MCF 10A (cell line): ENCODE measurements at regions of chr6 and their contacts with region 1.

Region 1: GRCh38 chr6:45709781-45710220 is 305.9 kb downstream of the CLIC5 start:
- DNase-seq: no peak
- H3K4me3 Mint-ChIP-seq: no peak overlapping the region
- H3K27ac Mint-ChIP-seq: no peak overlapping the region
- H3K4me1 Mint-ChIP-seq: peaks cover 11% of the 10 kb centered on the region
- H3K27me3 Mint-ChIP-seq: no peaks in the 10 kb centered on the region
- CTCF ChIP-seq: no peak

Region 2: GRCh38 chr6:45555981-45556771 is 153.6 kb before region 1 on chr6:
- CTCF ChIA-PET with region 1: no interaction called
- POLR2A ChIA-PET with region 1: no interaction called
- intact Hi-C with region 1: no loop called
- DNase-seq: no peak
- H3K4me3 Mint-ChIP-seq: no peak overlapping the region
- H3K27ac Mint-ChIP-seq: no peak overlapping the region
- H3K4me1 Mint-ChIP-seq: no peaks in the 10 kb centered on the region
- H3K27me3 Mint-ChIP-seq: no peaks in the 10 kb centered on the region
- CTCF ChIP-seq: no peak

Region 3: DNA sequence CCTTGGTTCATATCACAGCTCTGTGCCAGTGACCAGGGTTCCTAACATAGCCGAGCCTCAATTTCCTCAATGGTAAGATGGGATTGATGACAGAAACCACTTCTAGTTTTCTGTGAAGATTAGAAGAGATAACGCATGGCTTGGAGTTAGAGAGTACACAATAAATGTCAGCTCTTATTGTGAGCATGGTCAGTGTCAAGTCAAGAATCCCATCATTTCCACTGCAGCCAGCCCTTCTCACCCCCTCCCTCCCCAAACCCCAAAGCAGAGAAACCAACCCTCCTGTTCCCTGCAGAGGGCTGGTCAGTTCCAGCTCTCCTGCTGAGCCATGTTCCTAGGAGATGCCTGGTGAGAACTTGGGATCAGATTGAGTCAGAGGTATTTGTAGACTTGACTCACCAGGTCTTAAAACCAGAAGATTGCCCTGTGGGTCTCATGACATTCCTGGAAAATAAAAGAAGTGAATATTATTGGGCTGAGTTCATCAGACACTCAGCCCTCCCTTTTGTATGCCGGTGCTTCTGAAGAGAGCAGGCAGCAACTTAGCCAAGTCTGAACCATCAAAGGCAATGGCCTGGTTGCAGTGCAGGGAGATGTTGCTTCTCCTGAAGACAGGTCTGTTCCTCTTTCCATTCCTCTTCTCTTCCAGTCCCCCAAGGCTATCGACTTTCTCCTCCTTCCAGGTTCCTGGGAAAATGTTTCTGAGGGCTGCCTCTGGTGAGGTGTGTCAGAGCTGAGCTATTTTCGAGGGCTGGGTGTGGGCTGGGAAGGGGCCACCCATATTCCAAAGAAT is 54.0 kb before region 1 on chr6:
- CTCF ChIA-PET with region 1: interaction called, 3 read pairs
- POLR2A ChIA-PET with region 1: no interaction called
- intact Hi-C with region 1: loop called (anchors 10 kb)
- DNase-seq: peak; percentile 97
- H3K4me3 Mint-ChIP-seq: no peak overlapping the region
- H3K27ac Mint-ChIP-seq: peak overlapping the region; percentile 70
- H3K4me1 Mint-ChIP-seq: peaks cover 48% of the 10 kb centered on the region
- H3K27me3 Mint-ChIP-seq: no peaks in the 10 kb centered on the region
- CTCF ChIP-seq: no peak